Sigmoid colon (tissue), 7 donors: ENCODE measurements at regions of chr2 and their contacts with region 1.

Region 1: GRCh38 chr2:108607706-108608301 is 73.5 kb downstream of the LIMS1 start:
- DNase-seq: no peak
- H3K4me3 ChIP-seq: no peak overlapping the region
- H3K27ac ChIP-seq: peak overlapping the region in 1 of 4 donors; percentile 13
- H3K4me1 ChIP-seq: peaks cover 0 to 54% (median 32%) of the 10 kb centered on the region in 4 donors
- H3K27me3 ChIP-seq: no peaks in the 10 kb centered on the region
- CTCF ChIP-seq: peak; percentile 30 to 64 (median 46)
- EP300 ChIP-seq: no peak
- POLR2A ChIP-seq: no peak

Region 2: GRCh38 chr2:108637304-108637669 is 29.5 kb after region 1 on chr2:
- intact Hi-C with region 1: loop called (anchors 2 kb)
- DNase-seq: no peak
- H3K4me3 ChIP-seq: no peak overlapping the region
- H3K27ac ChIP-seq: peak overlapping the region in 3 of 4 donors; percentile 56 to 75 (median 69)
- H3K4me1 ChIP-seq: peaks cover 0 to 89% (median 71%) of the 10 kb centered on the region in 4 donors
- H3K27me3 ChIP-seq: no peaks in the 10 kb centered on the region
- CTCF ChIP-seq: no peak
- EP300 ChIP-seq: no peak
- POLR2A ChIP-seq: no peak

Region 3: GRCh38 chr2:108719149-108720044 is 111.6 kb after region 1 on chr2 and contains the start of gene RANBP2:
- intact Hi-C with region 1: loop called (anchors 10 kb)
- DNase-seq: peak; percentile 98
- H3K4me3 ChIP-seq: peak within 1 kb of the TSS; percentile 58 to 95 (median 77)
- H3K27ac ChIP-seq: peak within 1 kb of the TSS; percentile 90 to 100 (median 94)
- H3K4me1 ChIP-seq: peaks cover 0 to 15% (median 12%) of the 10 kb centered on the region in 4 donors
- H3K27me3 ChIP-seq: no peaks in the 10 kb centered on the region
- CTCF ChIP-seq: no peak
- EP300 ChIP-seq: peak in 2 of 4 donors; percentile 45 to 91
- POLR2A ChIP-seq: peak; percentile 91 to 96
- total RNA-seq, gene RANBP2: 52.6 to 66.5 (median 59.2) TPM